CD8-positive, alpha-beta T cell (primary cell): ENCODE measurements at regions of chr2 and their contacts with region 1.

Region 1: DNA sequence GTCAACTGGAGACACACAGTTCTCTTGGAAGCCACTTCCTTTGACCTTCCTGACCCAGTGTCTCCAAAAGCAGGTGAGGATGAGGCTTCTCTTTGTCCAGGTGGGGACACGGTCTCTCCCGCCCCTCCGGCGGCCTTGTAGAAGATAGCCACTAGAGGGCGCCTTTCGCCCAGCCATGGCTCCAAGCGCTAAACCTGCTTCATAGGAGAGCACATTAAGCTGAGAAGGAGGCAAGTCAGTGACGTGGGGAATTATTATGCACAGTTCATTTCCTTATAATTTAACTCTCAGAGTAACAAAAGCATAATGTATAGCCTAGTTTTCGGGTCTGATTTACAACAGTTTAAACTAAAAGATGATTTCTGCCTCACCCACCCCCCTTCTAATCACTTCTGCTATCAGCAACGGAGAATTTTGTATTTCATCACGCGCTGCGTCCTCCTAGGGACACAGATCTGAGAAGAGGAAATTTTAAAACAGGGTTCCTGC is 208.7 kb downstream of the ICOS start:
- DNase-seq: peak; percentile 50 to 84 (median 76)
- ATAC-seq: peak; percentile 92
- H3K4me3 ChIP-seq: peak overlapping the region; percentile 46 to 49
- H3K4me3 Mint-ChIP-seq: peak overlapping the region; percentile 90
- H3K27ac ChIP-seq: no peak overlapping the region
- H3K27ac Mint-ChIP-seq: peak overlapping the region; percentile 84
- H3K4me1 ChIP-seq: no peaks in the 10 kb centered on the region
- H3K4me1 Mint-ChIP-seq: peaks cover 10% of the 10 kb centered on the region
- H3K27me3 ChIP-seq: no peaks in the 10 kb centered on the region
- H3K27me3 Mint-ChIP-seq: peaks cover 18% of the 10 kb centered on the region
- CTCF ChIP-seq: peak; percentile 98

Region 2: DNA sequence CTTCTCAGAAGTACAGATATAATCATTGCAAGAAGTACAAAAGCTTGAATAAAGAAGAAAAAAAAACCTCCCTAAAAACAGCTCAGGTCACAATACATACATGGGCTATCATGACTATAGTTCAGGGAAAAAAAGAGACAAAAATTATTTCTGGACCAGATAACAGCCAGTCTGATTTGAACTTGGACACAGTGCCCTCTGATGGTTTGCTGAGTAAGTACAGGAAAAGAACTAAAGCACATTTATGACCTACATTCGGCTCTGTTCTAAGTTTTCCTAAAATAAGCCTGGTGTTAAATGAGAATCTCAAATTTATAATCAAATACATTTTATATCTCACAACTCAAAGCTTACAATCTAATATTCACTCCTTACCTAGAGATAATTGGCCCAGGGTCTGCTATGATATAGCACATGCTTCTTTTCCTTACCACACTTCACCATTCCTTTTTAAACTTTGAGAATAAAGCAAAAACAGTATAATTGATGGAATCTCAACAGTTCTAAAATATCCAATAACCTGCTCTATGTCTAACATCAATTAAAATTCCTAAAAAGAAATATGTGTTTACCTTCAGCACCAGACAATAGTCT is 691.4 kb before region 1 on chr2:
- CTCF ChIA-PET with region 1: no interaction called
- POLR2A ChIA-PET with region 1: no interaction called
- intact Hi-C with region 1: no loop called
- DNase-seq: peak in 3 of 9 experiments; percentile 16 to 65 (median 57)
- ATAC-seq: peak; percentile 51
- H3K4me3 ChIP-seq: no peak overlapping the region
- H3K4me3 Mint-ChIP-seq: no peak overlapping the region
- H3K27ac ChIP-seq: no peak overlapping the region
- H3K27ac Mint-ChIP-seq: no peak overlapping the region
- H3K4me1 ChIP-seq: no peaks in the 10 kb centered on the region
- H3K4me1 Mint-ChIP-seq: no peaks in the 10 kb centered on the region
- H3K27me3 ChIP-seq: no peaks in the 10 kb centered on the region
- H3K27me3 Mint-ChIP-seq: no peaks in the 10 kb centered on the region
- CTCF ChIP-seq: peak; percentile 67

Region 3: GRCh38 chr2:203928849-203929248 is 216.5 kb before region 1 on chr2:
- CTCF ChIA-PET with region 1: interaction called, 3 read pairs
- POLR2A ChIA-PET with region 1: no interaction called
- intact Hi-C with region 1: loop called in 1 of 2 experiments (anchors 1 kb)
- DNase-seq: peak in 2 of 9 experiments; percentile 43 to 59
- ATAC-seq: peak; percentile 42
- H3K4me3 ChIP-seq: no peak overlapping the region
- H3K4me3 Mint-ChIP-seq: no peak overlapping the region
- H3K27ac ChIP-seq: no peak overlapping the region
- H3K27ac Mint-ChIP-seq: no peak overlapping the region
- H3K4me1 ChIP-seq: peaks cover 15% of the 10 kb centered on the region
- H3K4me1 Mint-ChIP-seq: peaks cover 33% of the 10 kb centered on the region
- H3K27me3 ChIP-seq: no peaks in the 10 kb centered on the region
- H3K27me3 Mint-ChIP-seq: no peaks in the 10 kb centered on the region
- CTCF ChIP-seq: peak; percentile 52

Region 4: GRCh38 chr2:204159526-204159925 is 14.2 kb after region 1 on chr2:
- CTCF ChIA-PET with region 1: interaction called, 24 read pairs
- POLR2A ChIA-PET with region 1: no interaction called
- intact Hi-C with region 1: no loop called
- DNase-seq: no peak
- ATAC-seq: no peak
- H3K4me3 ChIP-seq: no peak overlapping the region
- H3K4me3 Mint-ChIP-seq: no peak overlapping the region
- H3K27ac ChIP-seq: no peak overlapping the region
- H3K27ac Mint-ChIP-seq: no peak overlapping the region
- H3K4me1 ChIP-seq: no peaks in the 10 kb centered on the region
- H3K4me1 Mint-ChIP-seq: no peaks in the 10 kb centered on the region
- H3K27me3 ChIP-seq: no peaks in the 10 kb centered on the region
- H3K27me3 Mint-ChIP-seq: peaks cover 12% of the 10 kb centered on the region
- CTCF ChIP-seq: no peak

Region 5: DNA sequence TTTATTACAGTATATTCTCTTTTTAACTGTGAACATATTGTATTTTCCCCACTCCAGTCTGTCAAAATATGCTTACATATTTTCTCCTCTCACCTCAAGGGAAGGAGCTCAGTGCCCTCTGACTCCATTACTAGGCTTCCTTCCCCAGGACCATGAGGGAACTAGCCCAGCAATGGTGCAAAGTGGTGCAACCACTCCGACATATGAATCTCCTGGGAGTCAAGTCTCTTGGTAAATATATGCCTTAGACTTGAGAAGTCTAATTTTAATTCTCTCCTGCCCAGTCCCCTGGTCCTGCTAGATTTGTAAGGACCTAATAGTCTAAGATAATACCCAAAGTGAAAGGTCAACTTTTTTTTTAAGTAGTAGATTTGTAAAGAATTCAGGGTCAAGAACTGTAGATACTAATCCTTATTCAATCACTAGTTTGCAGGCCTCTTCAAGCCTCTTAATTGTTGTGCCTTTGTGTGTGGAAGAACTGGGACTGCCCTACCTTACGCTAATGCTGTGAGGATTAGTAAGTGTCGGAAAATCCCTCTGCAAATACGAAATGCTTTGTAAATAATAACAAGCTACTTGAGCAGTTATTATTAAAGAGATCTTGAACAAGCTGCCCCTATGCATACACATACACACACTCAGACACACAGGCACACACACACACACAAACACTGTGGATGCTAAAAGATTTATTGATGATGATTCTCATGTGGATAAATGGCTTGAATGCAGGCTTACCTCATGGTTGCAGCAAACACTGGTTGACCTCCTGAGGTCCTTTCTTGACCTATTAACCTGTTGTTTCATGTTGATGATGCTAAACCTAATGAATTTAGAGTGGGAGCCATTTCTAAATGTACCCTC is 148.8 kb after region 1 on chr2:
- CTCF ChIA-PET with region 1: no interaction called
- POLR2A ChIA-PET with region 1: no interaction called
- intact Hi-C with region 1: no loop called
- DNase-seq: no peak
- ATAC-seq: no peak
- H3K4me3 ChIP-seq: no peak overlapping the region
- H3K4me3 Mint-ChIP-seq: no peak overlapping the region
- H3K27ac ChIP-seq: no peak overlapping the region
- H3K27ac Mint-ChIP-seq: no peak overlapping the region
- H3K4me1 ChIP-seq: no peaks in the 10 kb centered on the region
- H3K4me1 Mint-ChIP-seq: no peaks in the 10 kb centered on the region
- H3K27me3 ChIP-seq: peaks cover 0 to 4% of the 10 kb centered on the region in 2 experiments
- H3K27me3 Mint-ChIP-seq: peaks cover 20% of the 10 kb centered on the region
- CTCF ChIP-seq: no peak

Region 6: GRCh38 chr2:204691911-204692510 is 546.7 kb after region 1 on chr2:
- CTCF ChIA-PET with region 1: no interaction called
- POLR2A ChIA-PET with region 1: no interaction called
- intact Hi-C with region 1: loop called in 1 of 2 experiments (anchors 10 kb)
- DNase-seq: peak in 2 of 9 experiments; percentile 29 to 44
- ATAC-seq: no peak
- H3K4me3 ChIP-seq: no peak overlapping the region
- H3K4me3 Mint-ChIP-seq: no peak overlapping the region
- H3K27ac ChIP-seq: no peak overlapping the region
- H3K27ac Mint-ChIP-seq: no peak overlapping the region
- H3K4me1 ChIP-seq: peaks cover 5% of the 10 kb centered on the region
- H3K4me1 Mint-ChIP-seq: peaks cover 8% of the 10 kb centered on the region
- H3K27me3 ChIP-seq: no peaks in the 10 kb centered on the region
- H3K27me3 Mint-ChIP-seq: no peaks in the 10 kb centered on the region
- CTCF ChIP-seq: peak; percentile 44

Region 7: DNA sequence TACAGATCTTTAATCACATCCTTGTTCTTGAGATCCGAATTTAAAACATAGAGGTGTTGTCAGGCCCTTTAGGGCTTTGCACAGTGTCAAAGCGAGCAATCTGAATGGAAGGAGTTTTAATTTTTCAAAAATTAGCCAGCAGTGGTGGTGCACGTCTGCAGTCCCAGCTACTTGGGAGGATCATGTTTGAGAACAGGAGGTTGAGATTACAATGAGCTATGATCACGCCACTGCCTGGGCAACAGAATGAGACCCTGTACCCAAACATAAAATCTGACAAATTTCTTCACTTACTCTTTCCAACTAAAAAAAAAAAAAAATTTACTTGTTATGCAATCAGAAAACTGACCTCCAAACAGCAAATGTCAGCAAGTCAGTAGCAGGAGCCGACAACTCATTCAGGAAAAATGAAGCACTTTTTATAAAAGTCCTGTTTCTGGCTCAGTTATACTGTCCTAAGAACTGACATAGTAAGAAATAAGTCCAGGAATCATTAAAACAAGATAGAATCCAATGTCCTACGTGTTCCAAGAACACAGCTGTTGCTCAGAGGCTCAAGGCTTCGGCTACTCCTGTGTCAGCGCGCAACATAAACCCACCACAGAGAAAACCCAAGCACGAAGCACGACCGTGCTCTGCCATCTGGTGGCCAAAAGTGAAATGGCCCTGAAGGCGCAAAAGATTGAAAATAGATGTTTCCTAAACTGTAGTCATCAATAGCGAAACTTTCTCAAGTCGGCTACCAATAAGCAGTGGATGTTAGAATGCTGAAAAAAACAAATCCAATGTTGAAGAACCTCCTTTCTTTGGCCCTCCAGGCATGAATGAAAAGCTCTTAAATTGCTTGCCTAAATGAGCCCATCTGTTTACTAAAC is 1802.6 kb after region 1 on chr2:
- CTCF ChIA-PET with region 1: interaction called, 5 read pairs
- POLR2A ChIA-PET with region 1: no interaction called
- intact Hi-C with region 1: loop called (anchors 1 kb)
- DNase-seq: peak; percentile 19 to 67 (median 52)
- ATAC-seq: peak; percentile 71
- H3K4me3 ChIP-seq: no peak overlapping the region
- H3K4me3 Mint-ChIP-seq: no peak overlapping the region
- H3K27ac ChIP-seq: no peak overlapping the region
- H3K27ac Mint-ChIP-seq: no peak overlapping the region
- H3K4me1 ChIP-seq: no peaks in the 10 kb centered on the region
- H3K4me1 Mint-ChIP-seq: peaks cover 4% of the 10 kb centered on the region
- H3K27me3 ChIP-seq: peaks cover 0 to 4% of the 10 kb centered on the region in 2 experiments
- H3K27me3 Mint-ChIP-seq: peaks cover 27% of the 10 kb centered on the region
- CTCF ChIP-seq: peak; percentile 80